CD4-positive, alpha-beta T cell (primary cell): ENCODE measurements at regions of chr4 and their contacts with region 1.

Region 1: DNA sequence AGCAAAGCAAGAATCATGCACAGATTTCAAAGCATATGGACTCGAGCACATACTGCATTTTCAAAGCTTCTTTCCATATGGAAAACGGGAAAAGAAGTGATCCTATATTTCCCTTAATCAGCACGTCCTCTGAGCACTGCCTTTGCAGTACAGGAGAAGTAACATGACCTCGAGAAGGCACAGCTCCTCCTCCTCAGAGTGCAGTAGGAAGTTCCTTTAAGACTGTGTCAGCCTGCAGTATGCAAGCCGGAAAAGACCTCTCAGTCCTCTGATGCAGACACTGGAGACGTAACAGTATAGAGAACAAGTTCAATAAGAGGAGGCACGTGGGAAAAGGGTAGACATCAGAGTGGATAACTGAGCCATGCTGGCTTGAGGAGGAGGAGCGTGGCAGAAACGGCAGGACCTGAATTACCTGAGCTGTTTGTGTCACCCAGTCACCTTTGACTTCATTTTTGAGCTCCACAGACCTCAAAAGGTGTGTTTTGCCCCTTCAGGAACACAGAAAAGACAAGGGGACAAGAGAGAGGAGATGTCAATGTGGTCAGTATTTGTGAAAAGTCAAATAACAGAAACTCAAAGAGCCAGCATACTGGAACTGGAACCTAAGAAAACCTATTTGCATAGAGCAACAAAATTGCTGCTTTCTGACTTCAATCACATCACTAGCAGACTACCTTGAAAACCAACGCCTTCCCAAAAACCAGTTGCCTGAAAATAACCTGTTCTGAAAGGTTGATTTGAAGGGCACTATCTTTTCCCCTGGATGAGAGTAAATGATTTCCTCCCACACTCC is 20.8 kb downstream of the IRF2 start:
- DNase-seq: peak in 12 of 14 experiments; percentile 8 to 79 (median 38)
- ATAC-seq: peak; percentile 99
- H3K4me3 ChIP-seq: no peak overlapping the region
- H3K4me3 Mint-ChIP-seq: peak overlapping the region; percentile 32
- H3K27ac ChIP-seq: peak overlapping the region; percentile 65 to 74
- H3K27ac Mint-ChIP-seq: peak overlapping the region; percentile 86
- H3K4me1 ChIP-seq: peaks cover 52% of the 10 kb centered on the region
- H3K4me1 Mint-ChIP-seq: peaks cover 82% of the 10 kb centered on the region
- H3K27me3 ChIP-seq: no peaks in the 10 kb centered on the region
- H3K27me3 Mint-ChIP-seq: no peaks in the 10 kb centered on the region
- CTCF ChIP-seq: no peak

Region 2: GRCh38 chr4:184384056-184384809 is 69.3 kb before region 1 on chr4:
- CTCF ChIA-PET with region 1: no interaction called
- POLR2A ChIA-PET with region 1: no interaction called
- intact Hi-C with region 1: no loop called
- DNase-seq: peak in 3 of 14 experiments; percentile 8 to 39 (median 10)
- ATAC-seq: peak; percentile 11
- H3K4me3 ChIP-seq: no peak overlapping the region
- H3K4me3 Mint-ChIP-seq: peak overlapping the region; percentile 40
- H3K27ac ChIP-seq: peak overlapping the region in 1 of 2 donors; percentile 15
- H3K27ac Mint-ChIP-seq: peak overlapping the region; percentile 60
- H3K4me1 ChIP-seq: peaks cover 44% of the 10 kb centered on the region
- H3K4me1 Mint-ChIP-seq: peaks cover 68% of the 10 kb centered on the region
- H3K27me3 ChIP-seq: no peaks in the 10 kb centered on the region
- H3K27me3 Mint-ChIP-seq: no peaks in the 10 kb centered on the region
- CTCF ChIP-seq: no peak

Region 3: GRCh38 chr4:184417802-184418511 is 35.6 kb before region 1 on chr4:
- CTCF ChIA-PET with region 1: no interaction called
- POLR2A ChIA-PET with region 1: interaction called, 9 read pairs
- intact Hi-C with region 1: loop called in 1 of 2 experiments (anchors 5 kb)
- DNase-seq: peak in 4 of 14 experiments; percentile 28 to 74 (median 64)
- ATAC-seq: peak; percentile 58
- H3K4me3 ChIP-seq: peak overlapping the region; percentile 53
- H3K4me3 Mint-ChIP-seq: peak overlapping the region; percentile 79
- H3K27ac ChIP-seq: peak overlapping the region; percentile 66 to 78
- H3K27ac Mint-ChIP-seq: peak overlapping the region; percentile 92
- H3K4me1 ChIP-seq: peaks cover 72% of the 10 kb centered on the region
- H3K4me1 Mint-ChIP-seq: peaks cover 75% of the 10 kb centered on the region
- H3K27me3 ChIP-seq: no peaks in the 10 kb centered on the region
- H3K27me3 Mint-ChIP-seq: no peaks in the 10 kb centered on the region
- CTCF ChIP-seq: no peak

Region 4: DNA sequence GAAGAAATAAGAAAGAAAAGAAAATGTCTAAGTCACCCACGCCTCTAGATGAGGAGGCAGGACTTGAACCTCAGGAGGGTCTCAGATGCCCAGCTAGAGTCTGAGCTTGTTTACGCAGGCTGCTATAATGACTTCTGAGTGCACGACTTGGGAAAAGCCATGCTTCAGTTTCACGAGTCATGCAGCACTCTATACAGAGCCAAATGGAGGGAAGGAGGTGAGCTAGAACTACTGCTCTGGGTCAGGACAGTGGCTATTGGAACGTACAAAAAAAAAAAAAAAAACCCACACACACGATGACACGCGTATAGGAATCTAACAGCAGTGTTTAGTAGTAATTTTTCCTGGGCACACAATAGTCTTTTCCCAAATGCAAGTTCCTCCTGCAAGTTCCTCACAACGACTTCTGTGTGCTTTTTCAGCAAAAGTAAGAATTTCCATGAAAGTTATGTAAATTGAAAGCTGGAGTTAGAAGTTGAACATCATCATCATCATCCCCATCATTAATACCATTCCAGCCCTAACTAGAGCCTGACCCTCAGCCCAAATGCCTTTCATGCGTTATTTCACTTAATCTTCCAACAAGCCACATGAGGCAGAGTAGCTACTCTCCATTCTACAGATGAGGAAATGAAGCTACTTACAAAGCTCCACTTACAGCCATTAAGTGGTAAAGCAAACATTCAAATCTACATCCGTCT is 15.8 kb before region 1 on chr4:
- CTCF ChIA-PET with region 1: no interaction called
- POLR2A ChIA-PET with region 1: interaction called, 5 read pairs
- intact Hi-C with region 1: loop called in 1 of 2 experiments (anchors 2 kb)
- DNase-seq: no peak
- ATAC-seq: peak; percentile 60
- H3K4me3 ChIP-seq: no peak overlapping the region
- H3K4me3 Mint-ChIP-seq: no peak overlapping the region
- H3K27ac ChIP-seq: no peak overlapping the region
- H3K27ac Mint-ChIP-seq: peak overlapping the region; percentile 23
- H3K4me1 ChIP-seq: peaks cover 57% of the 10 kb centered on the region
- H3K4me1 Mint-ChIP-seq: peaks cover 92% of the 10 kb centered on the region
- H3K27me3 ChIP-seq: no peaks in the 10 kb centered on the region
- H3K27me3 Mint-ChIP-seq: no peaks in the 10 kb centered on the region
- CTCF ChIP-seq: no peak